PC-3 (cell line): ENCODE measurements at regions of chr6 and their contacts with region 1.

Region 1: DNA sequence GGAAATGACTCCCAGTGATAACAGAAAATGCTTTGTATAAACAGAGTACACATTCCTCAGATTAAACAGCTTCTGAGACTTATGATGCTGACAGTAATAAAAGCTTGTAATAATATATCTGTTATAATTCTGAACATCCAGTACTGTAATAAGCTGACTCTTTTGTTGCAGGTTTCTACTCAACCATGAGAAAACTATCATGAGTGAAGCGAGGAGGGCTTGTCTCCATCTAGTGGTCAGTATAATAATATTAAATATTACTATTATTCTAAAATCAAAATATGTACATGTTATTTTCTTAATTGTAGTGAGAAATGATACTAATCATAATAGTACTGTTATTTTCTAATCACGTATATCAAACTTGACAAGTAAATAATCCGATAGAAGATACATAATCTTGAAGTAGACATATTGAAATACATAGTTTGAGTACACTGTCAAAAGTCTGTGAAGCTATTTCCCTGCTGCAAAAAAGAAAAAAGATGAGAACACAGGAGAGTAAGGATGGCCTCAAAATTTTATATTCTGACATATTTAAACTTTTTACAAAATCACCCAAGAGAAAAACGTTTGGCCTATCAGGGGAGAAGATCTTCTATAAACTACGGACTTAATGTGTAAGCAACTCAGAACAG is 183.1 kb downstream of the MOXD1 start:
- DNase-seq: peak; percentile 42
- ATAC-seq: no peak; the same call in 1 of the 2 replicates
- H3K4me3 ChIP-seq: no peak overlapping the region
- H3K27ac ChIP-seq: no peak overlapping the region
- H3K4me1 ChIP-seq: no peaks in the 10 kb centered on the region
- H3K27me3 ChIP-seq: no peaks in the 10 kb centered on the region
- CTCF ChIP-seq: peak; percentile 36

Region 2: DNA sequence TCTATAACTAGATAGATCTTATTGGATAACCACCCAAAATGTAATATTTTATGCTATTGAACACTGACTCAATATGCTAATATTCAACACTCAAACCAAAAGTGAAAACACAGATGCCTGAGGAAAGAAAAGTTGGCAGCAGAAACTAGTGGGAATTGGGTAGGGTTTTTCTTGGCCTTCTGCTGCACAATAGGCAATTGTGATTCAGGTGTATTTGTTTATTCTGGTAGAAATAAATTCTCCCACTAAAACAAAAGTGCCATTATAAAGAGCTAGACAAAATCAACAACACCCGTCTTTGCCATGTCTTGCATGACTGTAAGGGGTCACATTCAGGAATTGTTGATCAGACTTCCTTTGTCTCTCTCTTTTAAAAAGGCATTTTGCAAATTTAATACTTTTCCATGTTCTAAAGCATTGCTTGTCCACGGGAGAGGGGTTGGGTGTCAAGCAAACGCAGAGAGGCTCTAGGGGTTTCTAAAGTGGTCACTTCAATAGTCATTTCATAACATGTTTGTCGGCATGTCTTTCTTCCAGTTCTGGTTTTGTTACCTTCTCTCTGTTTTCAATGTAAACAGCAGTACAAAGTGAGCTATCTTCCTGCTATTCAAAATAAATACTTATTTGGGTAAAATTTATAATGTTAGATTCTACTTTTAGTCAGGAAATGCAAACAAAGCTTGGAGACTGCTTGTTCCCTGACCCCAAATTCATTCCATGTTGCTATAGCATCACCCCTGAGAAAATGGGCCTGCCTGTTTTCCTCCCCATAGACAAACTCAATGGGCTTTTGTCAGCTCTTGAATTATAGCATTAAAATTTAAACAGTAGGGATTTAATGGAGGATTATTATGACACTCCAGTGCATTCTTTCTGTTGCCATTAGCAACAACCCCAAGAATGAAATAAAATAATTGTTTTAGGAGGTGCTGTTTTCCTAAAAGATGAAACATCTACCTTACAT is 50.0 kb before region 1 on chr6:
- CTCF ChIA-PET with region 1: no interaction called
- POLR2A ChIA-PET with region 1: no interaction called
- intact Hi-C with region 1: loop called (anchors 2 kb)
- DNase-seq: peak; percentile 26
- ATAC-seq: peak; percentile 81
- H3K4me3 ChIP-seq: no peak overlapping the region
- H3K27ac ChIP-seq: no peak overlapping the region
- H3K4me1 ChIP-seq: no peaks in the 10 kb centered on the region
- H3K27me3 ChIP-seq: no peaks in the 10 kb centered on the region
- CTCF ChIP-seq: no peak

Region 3: DNA sequence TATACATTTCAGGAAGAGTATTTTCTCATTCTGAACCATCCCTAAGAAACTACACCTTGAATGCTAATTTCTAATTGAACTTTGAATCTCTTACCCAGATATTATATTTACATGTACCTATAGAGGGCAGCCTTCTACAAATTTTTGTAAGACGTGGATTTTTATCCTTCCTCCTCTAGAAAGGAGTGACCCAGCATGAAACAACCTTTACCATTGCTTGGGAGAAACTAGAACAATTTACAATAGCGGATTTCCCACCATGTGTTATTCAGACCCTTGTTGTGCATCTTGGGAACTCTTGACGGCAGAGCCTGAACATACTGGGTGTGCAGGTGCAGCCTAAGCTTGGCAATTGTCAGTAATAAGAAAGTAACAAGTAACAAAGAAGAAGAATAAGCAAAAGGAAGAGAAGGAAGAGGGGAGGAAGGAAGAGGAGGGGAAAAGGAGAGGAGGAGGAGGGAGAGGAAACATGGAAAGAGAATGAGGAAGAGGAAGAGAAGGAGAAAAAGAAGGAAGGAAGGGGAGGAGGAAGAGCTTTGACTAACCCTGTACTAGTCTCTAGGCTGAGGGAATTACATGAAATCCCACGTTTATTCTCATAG is 451.6 kb after region 1 on chr6:
- CTCF ChIA-PET with region 1: no interaction called
- POLR2A ChIA-PET with region 1: no interaction called
- intact Hi-C with region 1: no loop called
- DNase-seq: peak; percentile 64
- ATAC-seq: peak; percentile 64
- H3K4me3 ChIP-seq: peak overlapping the region; percentile 44; the same call in 1 of the 2 replicates
- H3K27ac ChIP-seq: no peak overlapping the region
- H3K4me1 ChIP-seq: peaks cover 4% of the 10 kb centered on the region; the same call in 1 of the 2 replicates
- H3K27me3 ChIP-seq: no peaks in the 10 kb centered on the region
- CTCF ChIP-seq: peak; percentile 72